ENCODE measurements at regions of chr19 and their contacts with region 1.

Region 1: GRCh38 chr19:48795055-48795684 is 15.7 kb downstream of the BCAT2 start:
- DNase-seq: peak; percentile 67
- H3K4me3 ChIP-seq: peak overlapping the region; percentile 20
- H3K27me3 ChIP-seq: no peaks in the 10 kb centered on the region
- CTCF ChIP-seq: peak; percentile 94

Region 2: GRCh38 chr19:48780631-48781391 is 14.4 kb before region 1 on chr19:
- CTCF ChIA-PET with region 1: interaction called, 36 read pairs
- POLR2A ChIA-PET with region 1: no interaction called
- DNase-seq: no peak
- H3K4me3 ChIP-seq: no peak overlapping the region
- H3K27me3 ChIP-seq: no peaks in the 10 kb centered on the region
- CTCF ChIP-seq: no peak

Region 3: GRCh38 chr19:48812094-48812929 is 17.1 kb after region 1 on chr19:
- CTCF ChIA-PET with region 1: interaction called, 24 read pairs
- POLR2A ChIA-PET with region 1: no interaction called
- DNase-seq: no peak
- H3K4me3 ChIP-seq: peak overlapping the region; percentile 80
- H3K27me3 ChIP-seq: no peaks in the 10 kb centered on the region
- CTCF ChIP-seq: no peak

Region 4: DNA sequence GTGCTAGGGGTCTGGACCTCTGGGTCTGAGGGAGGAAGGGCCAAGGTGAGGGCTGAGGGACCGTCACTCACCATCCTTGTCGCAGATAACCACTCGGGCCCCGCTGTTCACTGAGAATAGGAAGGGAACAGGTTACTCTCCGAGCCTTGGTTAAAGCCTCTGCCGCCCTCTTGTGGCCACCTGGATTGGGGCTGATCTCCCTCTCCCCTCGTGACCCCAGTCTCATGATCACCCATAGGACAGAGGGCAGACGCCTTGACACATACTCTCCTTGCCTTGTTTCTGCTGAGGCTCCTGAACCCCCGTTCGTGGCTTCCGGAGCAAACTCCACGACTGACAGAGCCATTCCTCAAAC is 40.5 kb after region 1 on chr19:
- CTCF ChIA-PET with region 1: interaction called, 195 read pairs
- POLR2A ChIA-PET with region 1: interaction called, 3 read pairs
- DNase-seq: peak; percentile 20
- H3K4me3 ChIP-seq: peak overlapping the region; percentile 38
- H3K27me3 ChIP-seq: no peaks in the 10 kb centered on the region
- CTCF ChIP-seq: peak; percentile 92

Region 5: GRCh38 chr19:49017666-49018351 is 222.6 kb after region 1 on chr19:
- CTCF ChIA-PET with region 1: no interaction called
- POLR2A ChIA-PET with region 1: no interaction called
- DNase-seq: no peak
- H3K4me3 ChIP-seq: peak overlapping the region; percentile 45
- H3K27me3 ChIP-seq: no peaks in the 10 kb centered on the region
- CTCF ChIP-seq: peak; percentile 74